ENCODE measurements at regions of chr15 and their contacts with region 1.

Region 1: GRCh38 chr15:25684521-25685431 is 178.4 kb downstream of the ATP10A start:
- DNase-seq: peak; percentile 89 to 100
- H3K4me3 ChIP-seq: no peak overlapping the region
- H3K4me1 ChIP-seq: peaks cover 18% of the 10 kb centered on the region
- H3K27me3 ChIP-seq: no peaks in the 10 kb centered on the region

Region 2: GRCh38 chr15:25226360-25226759 is 458.4 kb before region 1 on chr15:
- in situ Hi-C with region 1: no loop called
- DNase-seq: no peak
- H3K4me3 ChIP-seq: no peak overlapping the region
- H3K4me1 ChIP-seq: no peaks in the 10 kb centered on the region
- H3K27me3 ChIP-seq: no peaks in the 10 kb centered on the region

Region 3: DNA sequence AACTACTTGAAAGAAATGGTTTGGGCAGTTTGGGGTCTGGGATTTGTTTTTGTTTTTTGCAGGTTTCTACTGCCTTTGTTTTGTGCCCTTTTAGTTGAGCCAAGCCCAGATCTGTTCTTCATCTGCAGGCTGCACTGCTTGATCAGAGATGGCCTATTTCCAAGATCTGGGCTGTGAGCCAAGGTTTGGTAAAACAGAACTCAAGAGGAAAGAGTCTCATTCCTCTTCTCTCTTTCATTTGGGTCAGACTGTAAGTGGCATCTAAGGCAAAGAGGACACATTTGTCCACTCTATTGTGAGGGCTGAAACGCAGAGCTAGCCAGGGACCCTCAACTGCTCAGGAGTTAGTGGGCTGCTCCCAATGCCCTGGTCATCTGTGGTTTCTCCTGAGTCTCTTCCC is 141.6 kb before region 1 on chr15:
- in situ Hi-C with region 1: loop called (anchors 10 kb)
- DNase-seq: peak; percentile 17 to 65
- H3K4me3 ChIP-seq: no peak overlapping the region
- H3K4me1 ChIP-seq: peaks cover 27% of the 10 kb centered on the region
- H3K27me3 ChIP-seq: no peaks in the 10 kb centered on the region

Measured in HAP-1 (cell line).